Caco-2 (cell line): ENCODE measurements at regions of chr11 and their contacts with region 1.

Region 1: DNA sequence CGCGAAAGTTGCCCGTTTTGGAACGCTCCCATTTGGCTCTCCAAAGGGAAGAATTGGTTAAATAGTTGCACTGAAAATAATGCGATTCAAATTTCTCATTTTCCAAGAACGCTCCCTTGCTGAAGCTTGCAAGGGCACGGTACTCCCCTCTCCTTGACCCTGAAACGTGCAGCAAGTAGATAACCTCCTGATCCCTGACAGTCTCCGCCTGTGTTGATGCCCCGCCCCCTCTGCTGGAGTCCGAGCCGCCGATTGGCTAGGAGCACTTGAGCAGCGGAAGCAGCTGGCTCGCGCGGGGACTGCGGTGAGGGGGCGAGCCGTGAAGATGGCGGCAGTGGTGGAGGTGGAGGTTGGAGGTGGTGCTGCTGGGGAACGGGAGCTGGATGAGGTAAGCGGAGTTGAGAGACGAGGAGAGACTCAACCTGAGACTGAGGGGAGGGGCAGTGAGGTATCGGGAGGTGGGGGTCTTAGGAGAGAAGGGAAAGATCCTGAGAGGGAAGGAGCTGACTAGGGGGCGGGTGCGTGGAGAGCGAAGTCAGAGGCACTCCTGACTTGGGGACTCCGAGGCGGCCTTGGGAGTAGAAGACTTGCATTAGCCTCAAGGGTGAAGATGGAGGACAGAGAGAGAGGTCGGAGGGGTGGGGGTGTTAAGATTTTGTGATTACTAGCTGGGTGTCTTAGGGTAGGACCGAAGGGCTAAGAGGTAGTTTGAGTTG is at the start of gene RNF121:
- DNase-seq: peak; percentile 99 to 100
- H3K4me3 ChIP-seq: peak within 1 kb of the TSS; percentile 74
- H3K4me3 Mint-ChIP-seq: peak within 1 kb of the TSS; percentile 90
- H3K27ac Mint-ChIP-seq: peak within 1 kb of the TSS; percentile 99
- H3K4me1 ChIP-seq: peaks cover 9% of the 10 kb centered on the region
- H3K4me1 Mint-ChIP-seq: peaks cover 15% of the 10 kb centered on the region
- H3K27me3 ChIP-seq: no peaks in the 10 kb centered on the region
- H3K27me3 Mint-ChIP-seq: no peaks in the 10 kb centered on the region
- CTCF ChIP-seq: no peak
- total RNA-seq, gene RNF121: 146 and 153 TPM in 2 replicates

Region 2: GRCh38 chr11:71913756-71914526 is 15.0 kb before region 1 on chr11:
- CTCF ChIA-PET with region 1: interaction called, 8 read pairs
- POLR2A ChIA-PET with region 1: no interaction called
- intact Hi-C with region 1: loop called (anchors 1 kb)
- DNase-seq: no peak
- H3K4me3 ChIP-seq: no peak overlapping the region
- H3K4me3 Mint-ChIP-seq: no peak overlapping the region
- H3K27ac Mint-ChIP-seq: no peak overlapping the region
- H3K4me1 ChIP-seq: peaks cover 34% of the 10 kb centered on the region
- H3K4me1 Mint-ChIP-seq: peaks cover 23% of the 10 kb centered on the region
- H3K27me3 ChIP-seq: no peaks in the 10 kb centered on the region
- H3K27me3 Mint-ChIP-seq: no peaks in the 10 kb centered on the region
- CTCF ChIP-seq: no peak

Region 3: GRCh38 chr11:71946144-71946571 is 17.3 kb after region 1 on chr11:
- CTCF ChIA-PET with region 1: interaction called, 15 read pairs
- POLR2A ChIA-PET with region 1: interaction called, 41 read pairs
- intact Hi-C with region 1: loop called (anchors 1 kb)
- DNase-seq: no peak
- H3K4me3 ChIP-seq: no peak overlapping the region
- H3K4me3 Mint-ChIP-seq: peak overlapping the region; percentile 37
- H3K27ac Mint-ChIP-seq: peak overlapping the region; percentile 94
- H3K4me1 ChIP-seq: peaks cover 69% of the 10 kb centered on the region
- H3K4me1 Mint-ChIP-seq: peaks cover 42% of the 10 kb centered on the region
- H3K27me3 ChIP-seq: no peaks in the 10 kb centered on the region
- H3K27me3 Mint-ChIP-seq: no peaks in the 10 kb centered on the region
- CTCF ChIP-seq: no peak

Region 4: DNA sequence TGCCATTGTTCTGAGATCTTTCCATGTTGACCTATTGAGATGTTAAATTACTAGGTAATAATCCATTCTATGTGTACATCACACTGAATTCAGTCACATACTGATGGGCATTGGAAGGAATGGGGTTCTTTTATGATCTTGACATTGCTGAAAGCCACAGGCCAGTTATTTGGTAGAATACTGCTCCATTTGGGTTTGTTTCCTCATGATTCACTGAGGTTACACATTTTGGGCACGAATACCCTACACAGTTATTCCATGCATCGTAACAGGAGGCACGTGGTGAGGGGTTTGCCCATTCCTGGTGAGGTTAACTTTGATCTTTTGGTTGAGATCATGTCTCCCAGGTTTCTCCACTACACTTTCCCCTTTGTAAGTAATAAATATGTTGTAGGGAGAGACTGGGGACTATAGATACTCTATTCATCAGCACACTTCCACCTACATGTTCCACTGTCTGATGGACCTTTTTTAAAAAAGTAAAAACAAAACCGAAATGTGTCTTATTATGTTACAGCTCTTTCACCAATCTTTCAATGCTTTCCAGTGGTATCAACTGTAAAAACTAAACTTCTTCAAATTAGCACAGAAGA is 251.0 kb after region 1 on chr11:
- CTCF ChIA-PET with region 1: no interaction called
- POLR2A ChIA-PET with region 1: no interaction called
- intact Hi-C with region 1: no loop called
- DNase-seq: no peak
- H3K4me3 ChIP-seq: no peak overlapping the region
- H3K4me3 Mint-ChIP-seq: no peak overlapping the region
- H3K27ac Mint-ChIP-seq: peak overlapping the region; percentile 40
- H3K4me1 ChIP-seq: peaks cover 24% of the 10 kb centered on the region
- H3K4me1 Mint-ChIP-seq: peaks cover 27% of the 10 kb centered on the region
- H3K27me3 ChIP-seq: no peaks in the 10 kb centered on the region
- H3K27me3 Mint-ChIP-seq: no peaks in the 10 kb centered on the region
- CTCF ChIP-seq: no peak

Region 5: GRCh38 chr11:72446902-72447769 is 518.2 kb after region 1 on chr11:
- CTCF ChIA-PET with region 1: interaction called, 11 read pairs
- POLR2A ChIA-PET with region 1: no interaction called
- intact Hi-C with region 1: no loop called
- DNase-seq: peak in 1 of 2 experiments; percentile 68
- H3K4me3 ChIP-seq: no peak overlapping the region
- H3K4me3 Mint-ChIP-seq: no peak overlapping the region
- H3K27ac Mint-ChIP-seq: no peak overlapping the region
- H3K4me1 ChIP-seq: no peaks in the 10 kb centered on the region
- H3K4me1 Mint-ChIP-seq: no peaks in the 10 kb centered on the region
- H3K27me3 ChIP-seq: no peaks in the 10 kb centered on the region
- H3K27me3 Mint-ChIP-seq: peaks cover 10% of the 10 kb centered on the region
- CTCF ChIP-seq: peak; percentile 93 to 96